ENCODE measurements at regions of chr1 and their contacts with region 1.

Region 1: DNA sequence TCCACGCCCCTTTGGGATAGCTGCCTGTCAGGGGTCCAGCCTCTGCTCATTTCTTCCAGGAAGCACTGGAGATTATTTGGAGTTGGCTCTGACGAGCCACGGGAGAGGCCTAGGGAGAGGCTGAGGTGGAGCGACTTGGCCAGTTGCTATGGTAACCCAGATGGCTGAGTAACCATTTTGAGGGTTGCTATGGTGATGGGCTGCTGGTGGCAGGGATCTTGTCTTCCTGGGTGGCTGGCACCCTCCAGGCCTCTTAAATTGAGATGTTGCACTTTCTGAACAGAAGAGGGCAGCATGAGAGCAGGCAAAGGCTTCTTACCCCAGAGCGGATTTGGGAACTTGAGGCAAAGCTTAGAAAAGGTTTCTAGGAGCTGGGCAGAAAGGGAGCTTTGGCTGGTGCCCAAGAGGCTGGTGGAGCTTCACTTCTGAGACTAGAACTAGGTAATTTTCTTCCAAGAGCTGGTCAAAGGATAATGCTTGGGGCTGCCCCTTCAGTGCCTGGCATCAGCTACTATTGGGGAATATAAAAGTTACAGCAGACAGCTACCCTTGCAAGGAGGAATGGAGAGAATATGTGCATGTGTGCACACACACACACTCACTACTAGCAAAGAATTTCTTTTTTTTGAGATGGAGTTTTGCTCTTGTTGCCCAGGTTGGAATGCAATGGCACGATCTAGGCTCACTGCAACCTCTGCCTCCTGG is 72.5 kb downstream of the NDUFS5 start:
- DNase-seq: peak; percentile 82
- H3K4me3 ChIP-seq: no peak overlapping the region
- H3K27ac ChIP-seq: no peak overlapping the region
- H3K27me3 ChIP-seq: no peaks in the 10 kb centered on the region
- CTCF ChIP-seq: peak; percentile 80

Region 2: GRCh38 chr1:39189592-39190041 is 90.9 kb after region 1 on chr1:
- CTCF ChIA-PET with region 1: interaction called, 45 read pairs
- POLR2A ChIA-PET with region 1: interaction called, 3 read pairs
- DNase-seq: no peak
- H3K4me3 ChIP-seq: no peak overlapping the region
- H3K27ac ChIP-seq: peak overlapping the region; percentile 63
- H3K27me3 ChIP-seq: no peaks in the 10 kb centered on the region
- CTCF ChIP-seq: no peak

Region 3: DNA sequence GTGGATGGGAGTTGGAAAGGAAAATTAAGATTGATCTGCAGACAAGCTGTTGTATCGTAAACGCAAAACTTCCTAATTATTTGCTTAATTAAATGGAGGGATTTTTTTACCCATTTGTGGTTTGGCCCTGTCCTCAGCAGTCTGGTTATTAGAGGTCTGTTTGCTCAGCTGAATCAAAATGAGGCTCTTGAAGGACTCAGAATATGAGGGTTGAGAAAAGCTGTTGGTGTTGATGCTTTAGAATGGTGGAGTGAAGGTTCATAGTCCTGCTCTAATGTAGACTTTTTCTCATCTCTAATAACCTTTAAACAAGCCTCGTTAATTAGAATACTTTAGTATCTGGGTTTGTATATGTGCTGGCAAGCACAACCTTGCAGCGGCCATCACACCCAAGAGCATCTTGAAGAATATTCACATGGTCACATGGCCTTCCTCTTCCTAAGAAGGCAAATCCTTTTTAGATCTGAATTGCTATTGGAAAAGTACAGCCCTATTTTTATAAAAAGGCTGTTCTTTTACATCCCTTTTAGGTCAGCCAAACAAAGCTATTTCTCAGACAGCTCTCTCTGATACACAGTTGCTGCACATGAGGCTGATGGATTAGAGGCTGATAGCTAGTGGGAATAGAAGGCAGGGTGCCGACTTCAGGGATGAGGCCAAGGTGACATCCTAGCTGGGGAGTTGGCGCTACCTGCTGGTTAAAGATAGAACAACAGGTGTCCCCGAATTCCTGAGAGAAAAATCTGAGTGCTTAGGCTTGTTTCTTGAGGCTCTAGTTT is 159.6 kb after region 1 on chr1:
- CTCF ChIA-PET with region 1: interaction called, 36 read pairs
- POLR2A ChIA-PET with region 1: no interaction called
- DNase-seq: no peak
- H3K4me3 ChIP-seq: no peak overlapping the region
- H3K27ac ChIP-seq: no peak overlapping the region
- H3K27me3 ChIP-seq: no peaks in the 10 kb centered on the region
- CTCF ChIP-seq: peak; percentile 81

Region 4: DNA sequence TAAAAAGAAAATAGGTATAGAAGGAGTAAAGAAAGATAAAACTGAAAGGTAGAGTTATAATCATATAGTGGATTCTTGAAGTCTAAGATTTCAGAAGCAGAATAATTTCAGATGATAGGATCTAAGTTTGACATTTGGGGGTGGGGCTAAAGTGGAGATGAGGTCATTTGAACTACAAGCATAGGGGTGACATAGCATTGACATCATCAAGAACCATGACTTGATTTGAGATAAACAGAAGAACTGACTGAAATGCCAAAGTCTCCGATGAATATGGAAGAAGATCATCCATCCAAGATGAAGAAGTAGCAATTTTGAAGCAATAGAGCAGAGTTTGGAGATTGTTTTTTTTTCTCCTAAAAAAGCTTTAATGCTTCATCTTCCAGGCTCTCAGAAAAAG is 228.1 kb after region 1 on chr1:
- CTCF ChIA-PET with region 1: interaction called, 11 read pairs
- POLR2A ChIA-PET with region 1: no interaction called
- DNase-seq: no peak
- H3K4me3 ChIP-seq: no peak overlapping the region
- H3K27ac ChIP-seq: no peak overlapping the region
- H3K27me3 ChIP-seq: no peaks in the 10 kb centered on the region
- CTCF ChIP-seq: no peak

Region 5: DNA sequence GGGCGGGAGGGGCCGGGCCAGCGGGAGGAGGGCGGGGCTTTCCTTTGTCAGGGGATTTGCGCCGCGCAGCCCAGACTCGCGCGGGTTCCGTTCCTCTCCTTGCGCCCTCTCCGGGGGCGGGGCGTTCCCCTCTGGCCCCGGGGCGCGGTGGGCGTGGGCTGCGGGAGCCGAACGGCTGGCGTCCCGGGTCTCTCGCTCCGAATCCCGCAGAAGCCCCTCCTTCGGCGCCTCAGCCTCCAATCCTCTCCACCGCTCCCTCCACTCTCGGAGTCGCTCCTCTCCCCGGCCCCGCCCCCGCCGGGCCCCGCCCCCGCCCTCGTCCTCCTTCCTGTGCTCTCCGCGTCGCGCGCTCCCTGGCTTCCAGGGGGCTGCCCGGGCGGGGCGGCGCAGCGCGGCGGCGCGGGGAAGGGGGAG is 309.9 kb after region 1 on chr1:
- CTCF ChIA-PET with region 1: interaction called, 29 read pairs
- POLR2A ChIA-PET with region 1: no interaction called
- DNase-seq: peak; percentile 87
- H3K4me3 ChIP-seq: peak overlapping the region; percentile 72
- H3K27ac ChIP-seq: peak overlapping the region; percentile 78
- H3K27me3 ChIP-seq: no peaks in the 10 kb centered on the region
- CTCF ChIP-seq: no peak

Region 6: DNA sequence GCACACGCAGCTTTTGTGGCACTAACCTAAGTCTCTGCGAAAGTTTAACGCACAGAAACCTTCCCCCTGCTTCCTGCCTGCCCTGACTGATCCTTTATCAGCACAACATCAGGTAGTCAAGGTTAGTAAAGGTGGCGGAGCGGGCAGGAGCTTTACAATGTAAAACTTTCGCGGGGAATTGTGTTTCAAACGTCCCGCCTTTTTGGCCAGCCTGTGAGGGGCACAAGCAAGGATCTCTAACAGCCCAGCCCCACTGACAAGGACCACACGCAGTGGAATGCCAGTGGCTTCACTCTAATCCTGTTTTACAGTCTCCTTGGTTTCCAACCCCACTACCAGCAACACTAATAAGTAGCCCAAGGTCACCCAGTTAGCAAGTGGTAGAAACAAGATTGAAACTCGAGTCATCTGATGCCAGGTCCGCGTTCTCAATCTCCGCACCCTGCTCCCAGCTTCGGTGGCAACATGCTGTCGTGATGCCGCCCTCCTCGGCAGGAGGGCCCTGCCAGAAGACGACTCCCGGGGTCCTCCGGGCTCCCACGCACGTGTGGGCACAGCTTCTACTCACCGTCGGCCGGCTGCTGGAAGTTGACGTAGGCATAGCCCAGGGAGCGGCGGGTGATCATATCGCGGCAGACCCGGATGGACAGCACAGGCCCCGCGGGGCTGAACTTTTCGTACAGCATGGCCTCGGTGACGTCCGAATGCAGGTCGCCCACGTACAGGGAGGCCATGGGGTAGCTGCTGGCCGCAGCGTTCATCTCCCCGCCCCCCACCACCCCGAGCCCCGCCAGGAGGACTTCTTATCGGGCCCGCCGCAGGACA is 476.7 kb after region 1 on chr1:
- CTCF ChIA-PET with region 1: interaction called, 15 read pairs
- POLR2A ChIA-PET with region 1: no interaction called
- DNase-seq: no peak
- H3K4me3 ChIP-seq: peak overlapping the region; percentile 83
- H3K27ac ChIP-seq: peak overlapping the region; percentile 61
- H3K27me3 ChIP-seq: no peaks in the 10 kb centered on the region
- CTCF ChIP-seq: no peak

Measured in AG04450 (cell line).